Activated CD4-positive, alpha-beta T cell treated with anti-CD3 and anti-CD28 coated beads, Interleukin-2, amount 10 ng/mL, durations not matched to agents 24 days and 14 days (primary cell): ENCODE measurements at regions of chr10 and their contacts with region 1.

Region 1: GRCh38 chr10:931416-932318 is at the start of gene LARP4B:
- DNase-seq: peak; percentile 100
- H3K4me3 Mint-ChIP-seq: peak within 1 kb of the TSS; percentile 92
- H3K27ac Mint-ChIP-seq: peak within 1 kb of the TSS; percentile 96
- H3K4me1 Mint-ChIP-seq: peaks cover 30% of the 10 kb centered on the region
- H3K27me3 Mint-ChIP-seq: no peaks in the 10 kb centered on the region
- total RNA-seq, gene LARP4B: 167 and 169 TPM in 2 replicates

Region 2: DNA sequence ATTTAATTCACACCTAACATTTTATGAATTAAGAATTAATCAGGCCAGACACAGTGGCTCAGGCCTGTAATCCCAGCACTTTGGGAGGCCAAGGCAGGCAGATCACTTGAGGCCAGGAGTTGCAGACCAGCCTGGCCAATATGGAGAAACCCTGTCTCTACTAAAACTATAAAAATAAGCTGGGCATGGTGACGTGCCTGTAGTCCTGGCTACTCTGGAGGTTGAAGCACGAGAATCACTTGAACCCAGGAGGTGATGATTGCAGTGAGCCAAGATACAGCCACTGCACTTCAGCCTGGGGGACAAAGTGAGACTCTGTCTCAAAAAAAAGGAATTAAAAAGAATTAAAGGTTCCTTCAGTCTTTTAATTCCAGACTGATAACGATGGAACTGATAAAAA is 11.2 kb before region 1 on chr10:
- intact Hi-C with region 1: no loop called
- DNase-seq: no peak
- H3K4me3 Mint-ChIP-seq: no peak overlapping the region
- H3K27ac Mint-ChIP-seq: no peak overlapping the region
- H3K4me1 Mint-ChIP-seq: peaks cover 18% of the 10 kb centered on the region
- H3K27me3 Mint-ChIP-seq: no peaks in the 10 kb centered on the region

Region 3: GRCh38 chr10:1056326-1057105 is 124.8 kb after region 1 on chr10 and contains the start of gene WDR37:
- intact Hi-C with region 1: loop called (anchors 1 kb)
- DNase-seq: peak; percentile 97
- H3K4me3 Mint-ChIP-seq: peak within 1 kb of the TSS; percentile 92
- H3K27ac Mint-ChIP-seq: peak within 1 kb of the TSS; percentile 93
- H3K4me1 Mint-ChIP-seq: peaks cover 70% of the 10 kb centered on the region
- H3K27me3 Mint-ChIP-seq: no peaks in the 10 kb centered on the region
- total RNA-seq, gene WDR37: 17.4 and 18.1 TPM in 2 replicates